GM13976 (cell line): ENCODE measurements at regions of chrX and their contacts with region 1.

Region 1: DNA sequence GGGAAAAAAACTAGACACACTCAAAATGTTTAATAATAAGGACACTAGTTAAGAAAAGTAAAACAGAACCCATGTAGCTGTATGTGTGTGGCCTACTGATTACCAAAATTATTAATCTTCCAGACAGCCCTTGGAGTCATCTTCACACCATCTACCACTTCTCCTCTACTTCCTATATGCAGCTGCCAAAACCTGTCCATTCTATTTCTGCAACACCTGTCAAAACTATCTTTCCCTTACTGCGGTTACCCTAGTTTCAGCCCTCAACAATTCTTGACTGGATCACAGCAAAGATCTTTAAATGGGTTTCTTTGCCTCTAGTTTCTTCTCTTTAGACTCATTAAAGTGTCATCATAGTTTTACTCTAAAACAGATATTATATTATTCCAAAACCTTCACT is 72.6 kb downstream of the GPR82 start:
- DNase-seq: no peak
- CTCF ChIP-seq: no peak

Region 2: GRCh38 chrX:41275661-41276609 is 520.6 kb before region 1 on chrX:
- in situ Hi-C with region 1: no loop called
- DNase-seq: peak; percentile 79
- CTCF ChIP-seq: peak; percentile 55

Region 3: GRCh38 chrX:42943051-42943974 is 1146.7 kb after region 1 on chrX:
- in situ Hi-C with region 1: loop called (anchors 10 kb)
- DNase-seq: no peak
- CTCF ChIP-seq: no peak